ENCODE measurements at regions of chr1 and their contacts with region 1.

Region 1: GRCh38 chr1:206684478-206685333 is at the start of gene MAPKAPK2:
- DNase-seq: no peak
- H3K4me3 ChIP-seq: peak within 1 kb of the TSS; percentile 63 to 94
- H3K27ac ChIP-seq: peak within 1 kb of the TSS; percentile 98
- H3K4me1 ChIP-seq: peaks cover 51% of the 10 kb centered on the region
- H3K27me3 ChIP-seq: no peaks in the 10 kb centered on the region
- CTCF ChIP-seq: no peak
- POLR2A ChIP-seq: peak in 1 of 2 donors; percentile 48
- total RNA-seq, gene MAPKAPK2: 51.1 TPM

Region 2: DNA sequence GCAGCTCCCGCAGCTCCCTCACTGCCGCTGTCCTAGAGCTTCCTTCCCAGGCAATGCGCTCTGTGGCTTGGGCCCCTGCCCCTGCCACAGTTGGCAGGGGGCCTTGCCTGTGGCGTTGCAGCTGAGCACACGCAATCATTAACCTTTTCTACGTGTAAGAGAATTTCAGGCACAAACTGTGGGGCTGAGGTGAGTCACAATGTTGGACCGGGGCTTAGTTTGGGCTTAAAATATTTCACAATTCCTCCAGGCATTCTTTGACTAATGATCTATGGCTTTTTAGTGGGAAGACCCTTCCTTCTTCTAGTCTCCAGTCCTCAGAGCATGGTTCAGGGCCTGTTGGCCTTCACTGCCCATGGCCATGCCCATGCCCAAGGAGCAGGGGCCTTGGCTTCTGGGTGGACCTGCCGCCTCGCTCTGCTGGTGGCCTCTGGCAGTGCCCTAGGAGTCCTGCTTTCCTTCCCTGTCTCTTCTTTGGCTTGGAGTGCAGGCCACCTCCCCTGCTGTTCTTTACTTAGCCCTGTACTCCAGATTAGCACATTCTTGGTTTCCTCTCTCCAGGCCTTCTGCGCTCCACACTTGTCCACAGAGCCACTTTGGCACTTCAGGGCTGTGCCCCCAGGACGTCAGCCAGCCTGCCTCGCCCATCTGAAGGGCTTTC is 39.2 kb after region 1 on chr1:
- intact Hi-C with region 1: loop called (anchors 5 kb)
- DNase-seq: no peak
- H3K4me3 ChIP-seq: no peak overlapping the region
- H3K27ac ChIP-seq: peak overlapping the region; percentile 47
- H3K4me1 ChIP-seq: peaks cover 84% of the 10 kb centered on the region
- H3K27me3 ChIP-seq: no peaks in the 10 kb centered on the region
- CTCF ChIP-seq: peak in 1 of 3 experiments; percentile 9
- POLR2A ChIP-seq: no peak

Region 3: GRCh38 chr1:206792939-206793607 is 108.4 kb after region 1 on chr1:
- intact Hi-C with region 1: no loop called
- DNase-seq: no peak
- H3K4me3 ChIP-seq: no peak overlapping the region
- H3K27ac ChIP-seq: no peak overlapping the region
- H3K4me1 ChIP-seq: no peaks in the 10 kb centered on the region
- H3K27me3 ChIP-seq: no peaks in the 10 kb centered on the region
- CTCF ChIP-seq: no peak
- POLR2A ChIP-seq: no peak

Region 4: DNA sequence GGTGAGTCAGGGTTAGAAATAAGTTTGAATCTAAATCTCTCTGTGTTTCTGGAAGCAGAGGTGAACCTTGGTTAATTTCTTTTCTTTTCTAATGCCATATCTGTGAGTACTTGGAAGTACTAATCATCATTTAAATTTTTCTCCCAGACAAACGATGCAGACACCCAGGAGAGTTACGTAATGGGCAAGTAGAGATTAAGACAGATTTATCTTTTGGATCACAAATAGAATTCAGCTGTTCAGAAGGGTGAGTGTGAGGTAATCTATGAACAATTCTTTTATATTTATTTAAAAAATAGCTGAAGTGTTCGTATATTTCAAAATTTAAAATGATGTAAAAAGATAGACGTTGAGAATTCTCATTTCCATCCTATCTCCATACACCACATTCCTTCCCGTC is 430.6 kb after region 1 on chr1:
- intact Hi-C with region 1: no loop called
- DNase-seq: no peak
- H3K4me3 ChIP-seq: no peak overlapping the region
- H3K27ac ChIP-seq: no peak overlapping the region
- H3K4me1 ChIP-seq: no peaks in the 10 kb centered on the region
- H3K27me3 ChIP-seq: no peaks in the 10 kb centered on the region
- CTCF ChIP-seq: no peak
- POLR2A ChIP-seq: no peak